ENCODE measurements at regions of chr2 and their contacts with region 1.

Region 1: DNA sequence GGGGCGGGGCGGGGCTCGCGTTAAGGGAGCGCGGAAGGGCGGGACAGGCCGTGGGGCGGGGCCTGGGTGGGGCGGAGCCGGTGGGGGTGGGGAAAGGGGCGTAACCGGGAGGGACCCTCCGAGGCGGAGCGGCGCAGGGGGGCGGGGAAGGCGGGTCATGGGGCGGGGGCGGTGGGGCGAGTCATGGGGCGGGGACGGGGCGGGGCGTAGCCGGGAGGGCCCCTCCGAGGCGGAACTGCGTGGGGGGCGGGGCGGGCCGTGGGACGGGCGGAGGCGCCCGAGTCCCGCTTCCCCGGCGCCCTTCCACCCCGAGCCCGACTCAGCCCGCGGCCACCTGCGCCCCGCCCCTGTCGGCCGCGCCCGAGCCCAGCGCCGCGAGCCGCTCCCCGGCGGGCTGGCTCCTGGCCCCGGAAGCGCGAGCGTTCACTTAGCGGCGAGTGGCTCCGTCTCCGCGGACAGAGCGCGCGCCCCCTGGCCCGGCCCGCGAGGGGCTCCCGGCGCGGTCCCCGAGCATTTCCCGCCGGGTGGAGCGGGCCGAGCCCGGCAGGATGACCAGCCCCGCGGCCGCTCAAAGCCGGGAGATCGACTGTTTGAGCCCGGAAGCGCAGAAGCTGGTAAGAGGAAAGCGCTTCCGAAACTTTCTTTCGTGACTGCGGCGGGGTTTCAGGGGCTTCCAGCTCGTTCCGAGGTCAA is 64.7 kb downstream of the LRRFIP1 start:
- DNase-seq: peak; percentile 96 to 98
- ATAC-seq: peak; percentile 77 to 83 (median 80)
- H3K4me3 ChIP-seq: peak overlapping the region; percentile 88
- H3K27ac ChIP-seq: peak overlapping the region; percentile 96
- H3K4me1 ChIP-seq: peaks cover 80% of the 10 kb centered on the region
- H3K27me3 ChIP-seq: no peaks in the 10 kb centered on the region
- CTCF ChIP-seq: no peak

Region 2: GRCh38 chr2:237290261-237290660 is 401.8 kb before region 1 on chr2:
- intact Hi-C with region 1: no loop called
- DNase-seq: peak; percentile 86 to 94
- ATAC-seq: peak; percentile 79 to 92 (median 86)
- H3K4me3 ChIP-seq: no peak overlapping the region
- H3K27ac ChIP-seq: peak overlapping the region; percentile 91
- H3K4me1 ChIP-seq: peaks cover 27% of the 10 kb centered on the region
- H3K27me3 ChIP-seq: no peaks in the 10 kb centered on the region
- CTCF ChIP-seq: no peak

Region 3: DNA sequence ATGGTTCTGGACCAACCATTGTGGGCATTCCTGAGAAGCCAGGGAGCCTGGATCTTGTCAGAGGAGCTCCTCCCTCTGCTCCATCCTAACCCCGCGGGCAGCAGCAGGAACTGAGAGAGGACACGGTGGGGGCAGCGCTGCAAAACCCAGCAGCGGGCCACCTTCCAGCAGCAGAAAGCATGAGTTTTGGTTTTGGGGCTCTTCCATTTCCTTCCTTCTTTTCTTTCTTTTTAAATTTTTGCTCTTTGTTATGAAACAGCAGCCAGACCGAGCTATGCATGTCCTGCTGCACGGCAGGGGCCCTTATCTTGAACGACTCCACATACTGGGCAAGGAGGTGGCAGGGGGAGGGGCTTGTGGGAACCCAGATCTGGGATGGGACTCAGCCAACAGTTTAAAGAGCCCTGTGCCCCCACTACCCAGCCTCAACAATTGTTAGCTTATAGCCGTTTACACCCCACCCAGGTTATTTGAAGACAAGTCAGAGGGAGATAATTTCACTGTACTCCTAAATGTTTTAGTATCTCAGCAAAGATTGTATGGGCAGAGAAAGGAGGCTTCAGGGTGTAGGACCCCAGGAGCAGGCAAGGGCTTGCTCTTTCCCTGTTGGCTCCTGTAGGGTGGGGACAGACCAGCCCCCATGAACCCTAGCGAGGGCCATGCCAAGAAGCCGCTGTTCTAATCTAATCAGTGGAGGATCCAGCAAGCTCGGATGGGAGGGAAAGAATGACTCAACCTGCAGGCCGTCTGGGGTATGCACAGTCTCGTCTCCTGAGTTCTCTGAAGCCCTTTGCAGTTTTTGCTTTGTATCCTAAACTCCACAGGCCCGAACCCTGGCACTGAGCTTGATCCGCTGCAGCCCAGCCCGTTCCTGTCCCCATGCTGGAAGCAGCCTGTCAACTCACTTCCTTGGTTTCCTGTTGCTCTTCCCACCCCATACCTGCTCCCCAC is 10.7 kb after region 1 on chr2:
- intact Hi-C with region 1: loop called in 1 of 2 experiments (anchors 1 kb)
- DNase-seq: peak in 1 of 2 donors; percentile 67
- ATAC-seq: peak in 3 of 4 donors; percentile 23 to 33 (median 26)
- H3K4me3 ChIP-seq: peak overlapping the region; percentile 11
- H3K27ac ChIP-seq: peak overlapping the region; percentile 96
- H3K4me1 ChIP-seq: peaks cover 98% of the 10 kb centered on the region
- H3K27me3 ChIP-seq: no peaks in the 10 kb centered on the region
- CTCF ChIP-seq: no peak

Region 4: GRCh38 chr2:237714690-237715458 is 22.8 kb after region 1 on chr2:
- intact Hi-C with region 1: loop called in 1 of 2 experiments (anchors 1 kb)
- DNase-seq: peak in 1 of 2 donors; percentile 73
- ATAC-seq: peak; percentile 80 to 88 (median 83)
- H3K4me3 ChIP-seq: peak overlapping the region; percentile 55
- H3K27ac ChIP-seq: peak overlapping the region; percentile 86
- H3K4me1 ChIP-seq: peaks cover 69% of the 10 kb centered on the region
- H3K27me3 ChIP-seq: no peaks in the 10 kb centered on the region
- CTCF ChIP-seq: no peak

Region 5: DNA sequence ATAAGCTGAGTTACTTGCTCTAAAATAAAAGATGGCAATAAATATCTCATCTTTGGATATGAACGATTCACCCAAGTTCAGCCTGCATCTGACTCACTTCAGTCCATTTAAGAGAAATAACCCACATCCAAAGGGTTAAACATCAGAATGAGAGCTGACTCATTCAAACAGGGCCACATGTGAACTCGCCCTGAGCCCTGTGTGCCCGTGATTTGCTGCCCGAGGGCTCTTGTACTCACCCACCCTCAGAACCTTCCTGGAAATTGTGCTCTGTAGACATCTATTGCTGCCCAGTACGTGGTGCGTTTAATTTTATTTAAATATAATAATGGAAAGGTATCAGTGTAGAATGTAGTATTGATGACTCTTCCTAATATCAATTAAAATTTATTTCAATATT is 39.6 kb after region 1 on chr2:
- intact Hi-C with region 1: loop called in 1 of 2 experiments (anchors 5 kb)
- DNase-seq: peak in 1 of 2 donors; percentile 62
- ATAC-seq: peak; percentile 72 to 87 (median 81)
- H3K4me3 ChIP-seq: no peak overlapping the region
- H3K27ac ChIP-seq: peak overlapping the region; percentile 83
- H3K4me1 ChIP-seq: peaks cover 60% of the 10 kb centered on the region
- H3K27me3 ChIP-seq: no peaks in the 10 kb centered on the region
- CTCF ChIP-seq: no peak

Region 6: DNA sequence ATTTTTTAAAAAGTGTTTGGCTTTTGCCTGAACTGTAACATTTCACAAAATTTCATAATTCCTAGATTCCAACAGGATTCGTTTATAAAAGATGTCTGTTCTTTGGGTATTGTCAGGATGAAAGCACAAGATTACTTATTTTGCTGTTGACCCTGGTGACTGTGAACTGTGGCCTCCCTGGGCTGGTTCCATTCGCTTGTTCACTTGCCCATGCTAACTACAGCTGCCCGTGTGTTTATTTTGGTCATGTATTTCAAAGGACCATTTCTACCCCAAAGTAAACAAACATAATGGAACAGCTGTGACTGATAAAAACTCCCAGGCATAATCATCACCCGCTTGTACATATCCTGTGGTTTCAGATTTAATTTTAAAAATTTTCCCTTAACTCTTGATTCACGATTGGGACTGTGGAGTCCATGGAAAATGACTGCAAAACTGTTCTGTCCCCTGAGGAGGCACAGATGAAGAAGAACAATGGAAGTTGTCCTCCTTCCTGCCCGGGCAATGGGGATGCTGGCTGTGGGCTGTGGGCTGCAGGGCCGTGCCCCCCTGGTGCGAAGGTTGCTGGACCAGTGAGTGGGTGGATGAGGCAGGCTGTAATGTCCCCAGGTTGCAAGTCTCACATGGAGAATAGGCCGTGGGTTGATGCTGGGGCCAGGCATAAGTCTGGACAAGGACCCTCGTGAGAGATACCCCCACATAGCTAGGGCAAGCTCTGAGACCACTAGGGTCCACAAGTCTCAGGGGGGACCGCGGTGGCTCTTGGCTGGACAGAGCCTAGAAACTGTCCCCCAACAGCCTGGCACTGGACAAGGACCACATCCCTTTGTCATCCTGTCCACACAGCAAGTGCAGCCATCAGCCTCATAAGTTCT is 1737.7 kb after region 1 on chr2:
- intact Hi-C with region 1: no loop called
- DNase-seq: no peak
- ATAC-seq: no peak
- H3K4me3 ChIP-seq: no peak overlapping the region
- H3K27ac ChIP-seq: no peak overlapping the region
- H3K4me1 ChIP-seq: no peaks in the 10 kb centered on the region
- H3K27me3 ChIP-seq: no peaks in the 10 kb centered on the region
- CTCF ChIP-seq: no peak

Measured in psoas muscle (tissue), 8 donors.